A549 (cell line): ENCODE measurements at regions of chr20 and their contacts with region 1.

Region 1: DNA sequence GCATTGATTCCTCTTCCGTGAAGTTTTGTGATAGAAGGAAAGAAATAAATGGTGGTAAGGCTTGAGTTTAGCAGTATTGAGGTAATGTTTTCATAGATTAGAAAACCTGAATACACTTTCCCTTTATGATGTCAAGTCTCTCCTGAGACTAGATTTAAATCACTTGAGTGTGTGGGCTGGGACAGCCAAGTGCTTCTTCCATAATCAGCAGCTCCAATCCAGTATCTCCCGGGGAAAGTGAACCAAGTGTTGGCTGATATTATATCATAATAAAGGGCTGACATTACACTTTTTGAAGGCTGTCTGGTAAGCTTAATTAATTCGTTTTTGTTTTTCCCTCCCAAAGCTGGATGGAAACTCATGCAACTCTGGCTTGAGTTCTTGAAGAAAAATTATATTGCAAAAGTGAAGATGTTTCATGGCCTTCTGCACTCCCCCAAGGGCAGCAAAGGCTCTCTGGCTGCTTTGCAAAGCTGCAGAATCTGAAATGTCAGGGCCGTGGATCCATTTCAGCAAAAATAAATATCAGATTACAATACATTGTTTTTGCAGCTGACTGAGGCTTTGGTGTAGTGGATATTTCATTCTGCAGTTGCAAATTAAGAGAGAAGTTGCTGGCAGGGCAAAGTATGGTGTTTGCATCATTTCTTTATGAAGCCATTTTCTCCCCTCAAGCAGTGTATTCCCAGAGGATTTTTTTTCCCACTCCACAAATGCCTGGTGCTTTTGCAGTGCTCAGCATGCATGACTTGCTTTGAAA is 101.2 kb downstream of the MKKS start:
- DNase-seq: no peak
- ATAC-seq: no peak
- H3K4me3 ChIP-seq: no peak overlapping the region
- H3K27ac ChIP-seq: peak overlapping the region; percentile 6 to 69; a peak in 5 of 6 replicates
- H3K4me1 ChIP-seq: peaks cover 33% of the 10 kb centered on the region
- CTCF ChIP-seq: no peak
- EP300 ChIP-seq: no peak
- POLR2A ChIP-seq: no peak
- RAD21 ChIP-seq: no peak

Region 2: DNA sequence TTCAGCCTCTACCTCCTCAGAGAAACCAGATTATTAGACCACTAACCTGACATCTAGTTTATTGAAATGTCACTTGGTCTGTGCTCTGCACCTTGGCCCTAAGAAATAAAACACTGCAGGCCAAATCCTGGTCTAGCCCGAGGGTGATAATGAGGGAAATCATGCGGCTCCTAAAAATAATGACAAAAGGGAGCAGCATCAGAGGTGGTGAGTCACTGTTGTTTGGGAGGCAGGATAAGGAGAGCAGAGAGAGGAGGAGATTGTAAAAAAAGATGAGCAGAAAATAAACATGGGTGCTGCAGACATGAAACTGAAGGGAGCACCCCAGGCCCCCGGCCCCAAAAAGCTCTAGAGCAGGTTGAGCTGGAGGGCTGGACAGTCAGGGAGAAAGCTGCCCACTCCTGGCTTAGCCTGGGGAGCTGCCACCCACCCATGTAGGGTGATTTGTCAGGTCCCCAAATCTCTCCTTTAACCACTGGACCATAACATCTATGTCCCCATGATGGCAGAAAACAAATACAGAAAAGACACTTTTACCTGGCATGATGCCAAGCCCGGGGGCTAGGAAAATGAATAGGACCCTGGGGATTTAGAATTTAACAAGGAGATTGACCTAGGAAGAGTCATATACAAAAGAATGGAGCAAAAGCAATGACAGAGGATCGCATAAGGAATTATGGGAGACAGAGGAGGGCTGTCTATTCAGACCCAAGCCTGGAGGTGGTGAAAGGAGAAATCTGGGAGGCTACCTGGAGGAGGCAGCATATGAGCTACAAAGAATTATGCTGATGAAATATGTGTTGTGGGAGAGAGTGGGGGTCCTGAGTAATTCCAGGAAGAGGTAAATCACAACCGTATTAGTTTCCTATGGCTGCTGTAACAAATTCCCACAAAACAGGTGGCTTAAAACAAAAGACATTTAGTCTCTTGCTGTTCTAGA is 10.5 kb before region 1 on chr20:
- CTCF ChIA-PET with region 1: interaction called, 21 read pairs
- POLR2A ChIA-PET with region 1: no interaction called
- DNase-seq: no peak
- ATAC-seq: peak; percentile 34 to 47; a peak in 3 of 6 replicates
- H3K4me3 ChIP-seq: no peak overlapping the region
- H3K27ac ChIP-seq: peak overlapping the region; percentile 49 to 82
- H3K4me1 ChIP-seq: peaks cover 22% of the 10 kb centered on the region
- CTCF ChIP-seq: no peak
- EP300 ChIP-seq: no peak
- POLR2A ChIP-seq: no peak
- RAD21 ChIP-seq: no peak

Region 3: DNA sequence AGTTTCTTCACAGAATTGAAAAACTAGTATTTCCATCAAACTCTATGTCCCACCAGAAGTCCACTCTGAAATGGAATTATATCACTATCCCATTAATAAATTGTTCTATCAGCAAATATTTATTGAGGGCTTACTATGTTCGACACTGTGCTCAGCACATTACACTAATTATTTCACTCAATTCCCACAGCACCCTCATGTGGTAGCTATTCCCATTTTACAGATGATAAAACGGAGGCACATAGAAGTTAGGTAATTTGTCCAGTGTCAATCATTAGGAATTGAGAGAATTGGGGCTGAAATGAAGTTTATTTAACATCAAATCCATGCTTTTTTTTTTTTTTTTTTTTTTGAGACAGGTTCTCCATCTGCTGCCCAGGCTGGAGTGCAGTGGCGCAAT is 48.7 kb after region 1 on chr20:
- CTCF ChIA-PET with region 1: no interaction called
- POLR2A ChIA-PET with region 1: no interaction called
- DNase-seq: peak in 1 of 2 experiments; percentile 56
- ATAC-seq: no peak; a peak in 1 of 6 replicates
- H3K4me3 ChIP-seq: no peak overlapping the region
- H3K27ac ChIP-seq: peak overlapping the region; percentile 36 to 77; a peak in 5 of 6 replicates
- H3K4me1 ChIP-seq: no peaks in the 10 kb centered on the region
- CTCF ChIP-seq: peak; percentile 54
- EP300 ChIP-seq: no peak
- POLR2A ChIP-seq: no peak
- RAD21 ChIP-seq: peak; percentile 57 to 65